MCF 10A (cell line): ENCODE measurements at regions of chr13 and their contacts with region 1.

Region 1: GRCh38 chr13:26186118-26186870 is 35.8 kb downstream of the RNF6 start:
- DNase-seq: peak; percentile 94
- H3K4me3 Mint-ChIP-seq: peak overlapping the region; percentile 96
- H3K27ac Mint-ChIP-seq: peak overlapping the region; percentile 93
- H3K4me1 Mint-ChIP-seq: peaks cover 5% of the 10 kb centered on the region
- H3K27me3 Mint-ChIP-seq: no peaks in the 10 kb centered on the region
- CTCF ChIP-seq: peak; percentile 50

Region 2: GRCh38 chr13:25085125-25085742 is 1101.1 kb before region 1 on chr13:
- CTCF ChIA-PET with region 1: no interaction called
- POLR2A ChIA-PET with region 1: no interaction called
- intact Hi-C with region 1: no loop called
- DNase-seq: peak; percentile 66
- H3K4me3 Mint-ChIP-seq: no peak overlapping the region
- H3K27ac Mint-ChIP-seq: no peak overlapping the region
- H3K4me1 Mint-ChIP-seq: no peaks in the 10 kb centered on the region
- H3K27me3 Mint-ChIP-seq: no peaks in the 10 kb centered on the region
- CTCF ChIP-seq: peak; percentile 52

Region 3: DNA sequence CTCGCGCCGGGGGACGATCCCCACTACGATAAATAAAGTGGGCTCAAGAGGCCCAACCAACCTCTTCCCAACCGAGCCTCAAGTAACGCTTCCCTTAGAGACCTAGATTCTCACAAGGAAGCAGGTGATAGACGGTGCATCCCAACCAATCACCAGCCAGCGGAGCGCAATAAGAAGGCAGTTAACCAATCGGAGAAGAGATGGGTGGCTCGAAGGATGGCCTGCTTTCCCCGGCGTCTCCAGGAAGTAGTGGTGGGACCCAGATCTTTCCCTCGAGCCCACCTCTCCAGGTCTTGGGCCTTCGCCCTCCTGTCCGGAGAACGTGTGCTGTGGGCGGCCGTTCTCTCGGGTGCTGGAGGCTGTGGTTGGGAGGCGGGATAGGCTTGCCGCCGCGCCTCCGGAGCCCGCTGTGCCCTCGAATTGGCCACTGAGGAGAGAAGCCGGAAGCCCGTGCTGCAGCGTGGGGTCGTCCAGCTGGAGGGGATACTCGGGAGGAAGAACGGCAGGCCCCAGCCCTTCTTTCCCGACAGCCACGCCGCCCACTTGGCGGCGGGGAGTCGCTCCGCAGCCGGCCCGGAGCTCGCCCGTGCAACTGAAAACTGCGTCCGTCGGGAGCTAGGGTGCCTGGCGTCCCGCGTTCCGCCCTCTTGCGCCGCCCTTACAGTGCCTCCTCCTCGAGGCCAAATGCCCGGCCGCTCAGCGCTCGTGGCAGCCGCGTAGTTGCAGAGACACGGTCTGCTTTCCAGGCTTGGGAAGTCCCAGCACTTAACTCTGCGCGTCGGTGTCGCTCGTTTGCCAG is 35.6 kb after region 1 on chr13 and contains the start of gene RNF6:
- CTCF ChIA-PET with region 1: interaction called, 6 read pairs
- POLR2A ChIA-PET with region 1: interaction called, 41 read pairs
- intact Hi-C with region 1: no loop called
- DNase-seq: peak; percentile 98
- H3K4me3 Mint-ChIP-seq: peak within 1 kb of the TSS; percentile 99
- H3K27ac Mint-ChIP-seq: peak within 1 kb of the TSS; percentile 99
- H3K4me1 Mint-ChIP-seq: peaks cover 20% of the 10 kb centered on the region
- H3K27me3 Mint-ChIP-seq: no peaks in the 10 kb centered on the region
- CTCF ChIP-seq: no peak
- total RNA-seq, gene RNF6: 81.9 and 86.7 TPM in 2 replicates

Region 4: GRCh38 chr13:26348966-26349365 is 162.7 kb after region 1 on chr13:
- CTCF ChIA-PET with region 1: no interaction called
- POLR2A ChIA-PET with region 1: no interaction called
- intact Hi-C with region 1: no loop called
- DNase-seq: no peak
- H3K4me3 Mint-ChIP-seq: no peak overlapping the region
- H3K27ac Mint-ChIP-seq: no peak overlapping the region
- H3K4me1 Mint-ChIP-seq: no peaks in the 10 kb centered on the region
- H3K27me3 Mint-ChIP-seq: no peaks in the 10 kb centered on the region
- CTCF ChIP-seq: no peak

Region 5: GRCh38 chr13:26482451-26483197 is 296.3 kb after region 1 on chr13:
- CTCF ChIA-PET with region 1: interaction called, 39 read pairs
- POLR2A ChIA-PET with region 1: no interaction called
- intact Hi-C with region 1: loop called (anchors 1 kb)
- DNase-seq: peak; percentile 84
- H3K4me3 Mint-ChIP-seq: peak overlapping the region; percentile 30
- H3K27ac Mint-ChIP-seq: no peak overlapping the region
- H3K4me1 Mint-ChIP-seq: no peaks in the 10 kb centered on the region
- H3K27me3 Mint-ChIP-seq: no peaks in the 10 kb centered on the region
- CTCF ChIP-seq: peak; percentile 74

Region 6: DNA sequence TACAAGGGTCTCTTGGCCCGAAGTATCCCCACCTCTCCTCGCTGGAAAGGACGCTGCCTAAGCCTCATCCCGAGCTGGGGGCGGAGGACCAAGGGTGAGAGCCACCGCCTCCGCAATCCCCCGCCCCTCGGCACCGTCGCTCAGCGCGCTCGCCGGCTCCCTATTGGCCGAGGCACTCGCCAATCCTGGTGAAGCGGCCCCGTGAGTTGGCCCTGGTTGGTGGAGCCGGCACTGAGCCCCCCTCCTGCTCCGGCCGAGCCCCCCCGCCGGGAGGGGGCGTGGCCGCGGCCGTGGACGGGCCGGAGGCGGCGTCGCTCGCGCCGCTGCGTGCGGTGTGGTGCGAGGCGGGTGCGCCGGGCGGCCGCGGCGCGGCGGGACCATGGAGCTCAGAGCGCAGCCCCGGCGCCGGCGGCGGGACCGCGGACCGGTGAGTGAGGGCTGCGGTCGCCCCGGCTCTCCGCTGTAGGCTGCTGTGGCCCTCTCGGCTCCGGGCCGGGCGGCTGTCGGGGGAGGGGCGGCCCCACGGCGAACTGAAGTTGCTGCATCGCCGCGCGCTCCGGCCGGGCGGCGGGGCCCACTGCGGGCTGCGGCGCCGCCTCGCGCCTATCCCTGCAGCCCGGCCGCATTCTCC is 371.2 kb after region 1 on chr13 and contains the start of gene WASF3:
- CTCF ChIA-PET with region 1: interaction called, 3 read pairs
- POLR2A ChIA-PET with region 1: interaction called, 10 read pairs
- intact Hi-C with region 1: loop called (anchors 5 kb)
- DNase-seq: peak; percentile 93
- H3K4me3 Mint-ChIP-seq: peak within 1 kb of the TSS; percentile 79
- H3K27ac Mint-ChIP-seq: no peak within 1 kb of the TSS
- H3K4me1 Mint-ChIP-seq: peaks cover 15% of the 10 kb centered on the region
- H3K27me3 Mint-ChIP-seq: peaks cover 11% of the 10 kb centered on the region
- CTCF ChIP-seq: no peak
- total RNA-seq, gene WASF3: 21.8 and 24.0 TPM in 2 replicates

Region 7: GRCh38 chr13:26929971-26930730 is 743.9 kb after region 1 on chr13:
- CTCF ChIA-PET with region 1: interaction called, 20 read pairs
- POLR2A ChIA-PET with region 1: no interaction called
- intact Hi-C with region 1: loop called (anchors 1 kb)
- DNase-seq: peak; percentile 69
- H3K4me3 Mint-ChIP-seq: no peak overlapping the region
- H3K27ac Mint-ChIP-seq: no peak overlapping the region
- H3K4me1 Mint-ChIP-seq: no peaks in the 10 kb centered on the region
- H3K27me3 Mint-ChIP-seq: peaks cover 42% of the 10 kb centered on the region
- CTCF ChIP-seq: peak; percentile 91